ENCODE measurements at regions of chr17 and their contacts with region 1.

Region 1: DNA sequence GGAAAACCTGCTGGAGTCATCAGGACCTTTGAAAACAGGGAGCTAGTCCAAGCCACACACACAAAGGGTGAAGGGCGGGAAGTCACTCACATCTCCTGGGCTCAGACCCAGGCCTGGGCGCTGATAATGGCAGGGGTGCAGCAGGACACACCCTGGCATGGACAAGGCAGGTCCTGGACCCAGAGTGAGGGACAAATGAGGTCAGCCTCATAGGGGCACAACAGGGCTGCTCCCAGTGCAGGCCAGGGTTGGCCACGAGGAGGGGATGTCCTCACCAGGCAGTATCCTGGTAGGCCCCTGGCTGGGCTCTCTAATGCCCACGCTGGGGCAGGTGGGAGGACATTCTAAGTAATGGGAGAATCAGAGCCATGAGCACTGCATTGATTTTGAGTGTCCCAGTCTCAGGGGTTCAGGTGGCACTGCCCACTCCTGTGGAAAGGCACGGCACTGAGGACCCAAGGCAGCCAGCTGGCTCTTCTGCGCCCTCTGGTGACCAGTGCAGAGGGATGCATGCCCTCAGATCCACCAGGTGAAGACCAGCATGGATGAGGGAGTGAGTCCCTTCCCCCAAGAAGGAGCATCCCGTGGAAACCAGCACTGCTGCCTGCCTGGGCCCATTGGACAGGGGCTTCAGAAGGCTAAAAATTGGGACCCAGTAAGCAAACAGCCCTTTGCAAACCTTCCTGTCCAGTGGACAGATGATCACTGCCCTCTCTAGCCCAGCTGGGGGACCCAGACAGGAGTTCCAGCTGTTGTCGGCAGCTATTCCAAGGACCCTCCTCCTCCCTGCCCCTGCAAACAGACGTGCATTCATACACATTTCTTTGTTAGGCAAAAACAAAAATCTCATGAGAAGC is 23.4 kb upstream of the SREBF1 start:
- DNase-seq: peak; percentile 72 to 88
- ATAC-seq: peak; percentile 90 to 99 (median 99)
- H3K4me3 ChIP-seq: no peak overlapping the region
- H3K4me3 Mint-ChIP-seq: no peak overlapping the region
- H3K27ac ChIP-seq: no peak overlapping the region
- H3K27ac Mint-ChIP-seq: no peak overlapping the region
- H3K4me1 ChIP-seq: peaks cover 15% of the 10 kb centered on the region
- H3K4me1 Mint-ChIP-seq: peaks cover 0 to 6% of the 10 kb centered on the region in 2 donors
- H3K27me3 ChIP-seq: no peaks in the 10 kb centered on the region
- H3K27me3 Mint-ChIP-seq: no peaks in the 10 kb centered on the region
- CTCF ChIP-seq: peak; percentile 98

Region 2: GRCh38 chr17:17812211-17813057 is 47.7 kb before region 1 on chr17:
- intact Hi-C with region 1: loop called (anchors 1 kb)
- DNase-seq: peak; percentile 76 to 78
- ATAC-seq: peak; percentile 66 to 79 (median 70)
- H3K4me3 ChIP-seq: no peak overlapping the region
- H3K4me3 Mint-ChIP-seq: no peak overlapping the region
- H3K27ac ChIP-seq: no peak overlapping the region
- H3K27ac Mint-ChIP-seq: no peak overlapping the region
- H3K4me1 ChIP-seq: peaks cover 19% of the 10 kb centered on the region
- H3K4me1 Mint-ChIP-seq: peaks cover 7 to 29% of the 10 kb centered on the region in 2 donors
- H3K27me3 ChIP-seq: no peaks in the 10 kb centered on the region
- H3K27me3 Mint-ChIP-seq: no peaks in the 10 kb centered on the region
- CTCF ChIP-seq: peak; percentile 100

Region 3: DNA sequence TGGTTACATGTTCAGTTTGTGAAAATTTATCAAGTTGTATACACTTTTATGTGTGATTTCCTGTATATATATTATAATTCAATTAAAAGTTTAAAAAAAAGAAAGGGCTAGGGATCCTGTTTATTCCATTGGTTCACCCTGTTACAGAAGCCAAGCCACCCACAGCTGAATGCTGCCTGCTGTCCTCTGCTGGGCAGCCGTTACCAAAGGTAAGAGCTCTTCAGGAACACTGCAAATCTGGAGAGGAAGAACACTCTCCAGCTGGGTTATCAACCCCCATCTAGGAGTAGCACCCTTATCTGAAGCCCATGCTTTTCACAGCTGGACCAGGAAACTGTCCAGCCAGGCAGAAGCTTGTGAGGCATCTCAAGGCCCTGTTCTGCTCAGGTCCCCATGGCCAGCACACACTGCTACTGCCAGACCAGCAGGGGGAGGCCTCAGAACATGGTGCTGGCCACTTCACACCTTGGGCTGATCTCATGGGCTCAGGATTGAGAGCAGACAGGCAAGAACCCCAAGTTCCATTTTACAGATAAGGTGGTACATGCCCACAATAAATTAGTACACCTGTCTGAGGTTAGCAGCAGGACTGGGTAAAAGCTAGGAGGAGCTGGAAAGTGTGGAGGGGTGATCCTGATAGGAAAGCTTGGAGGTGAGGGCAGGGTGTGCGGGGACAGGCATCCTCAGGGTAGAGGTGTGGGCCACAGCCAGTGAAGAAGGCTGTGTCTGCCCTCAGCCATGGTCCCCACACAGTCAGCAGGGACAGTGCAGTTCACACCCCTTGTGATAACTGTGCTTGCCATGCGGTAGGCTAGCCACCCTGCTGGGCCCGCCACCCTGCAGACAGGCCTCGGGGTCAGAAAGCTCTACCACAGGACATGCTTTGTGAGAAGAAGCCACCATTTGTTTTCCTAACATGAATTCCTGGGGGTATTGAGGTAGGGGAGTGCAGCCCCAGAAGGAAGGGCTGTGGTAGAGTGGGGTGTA is 30.9 kb after region 1 on chr17:
- intact Hi-C with region 1: no loop called
- DNase-seq: peak in 1 of 2 donors; percentile 66
- ATAC-seq: peak; percentile 50 to 72 (median 67)
- H3K4me3 ChIP-seq: no peak overlapping the region
- H3K4me3 Mint-ChIP-seq: no peak overlapping the region
- H3K27ac ChIP-seq: no peak overlapping the region
- H3K27ac Mint-ChIP-seq: peak overlapping the region in 1 of 2 donors; percentile 15
- H3K4me1 ChIP-seq: no peaks in the 10 kb centered on the region
- H3K4me1 Mint-ChIP-seq: peaks cover 0 to 7% of the 10 kb centered on the region in 2 donors
- H3K27me3 ChIP-seq: no peaks in the 10 kb centered on the region
- H3K27me3 Mint-ChIP-seq: no peaks in the 10 kb centered on the region
- CTCF ChIP-seq: no peak

Region 4: DNA sequence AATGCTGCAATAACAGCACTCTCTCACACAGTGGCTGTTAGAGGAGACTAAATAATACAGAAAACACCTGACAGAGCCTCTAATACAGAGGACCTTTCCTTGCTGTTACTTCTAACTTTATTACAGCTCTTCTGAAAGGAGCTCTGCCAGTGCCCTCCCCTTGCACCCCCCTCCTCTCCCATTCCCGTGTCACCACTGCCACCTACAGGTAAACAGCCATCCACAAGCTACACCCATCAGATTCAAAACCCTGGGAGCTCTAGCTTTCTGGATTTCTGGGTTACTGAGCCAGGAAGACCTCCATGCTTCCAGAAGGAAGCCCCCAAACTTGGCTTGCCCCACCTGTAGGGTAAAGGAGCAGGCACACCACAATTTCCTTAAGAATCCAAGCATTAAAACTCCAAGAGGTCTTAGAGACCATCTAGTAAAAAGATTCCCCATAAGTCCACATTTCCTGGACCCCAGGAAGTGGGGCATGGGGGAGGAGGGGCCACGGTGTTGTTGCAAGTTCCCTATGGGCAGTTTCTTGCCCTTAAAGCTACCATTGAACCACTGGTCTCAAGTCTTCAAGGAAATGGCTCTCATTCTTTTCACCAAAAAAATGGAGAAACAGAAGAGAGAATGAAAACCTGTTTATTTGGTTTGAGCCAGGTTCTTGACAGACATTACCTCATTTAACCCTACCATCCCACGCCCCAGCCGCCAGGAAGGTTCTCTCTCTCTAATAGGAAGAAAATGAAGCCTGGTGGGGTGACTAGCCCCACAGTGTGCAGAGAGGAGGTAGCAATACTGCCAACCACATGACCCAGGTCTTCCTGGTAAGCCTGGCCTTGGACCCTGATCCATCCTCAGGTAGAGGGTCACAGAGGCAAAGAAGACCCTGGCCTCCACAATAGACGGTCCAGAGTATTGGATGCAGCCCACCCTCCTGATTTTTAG is 59.3 kb after region 1 on chr17:
- intact Hi-C with region 1: no loop called
- DNase-seq: peak; percentile 26 to 81
- ATAC-seq: peak; percentile 70 to 86 (median 72)
- H3K4me3 ChIP-seq: no peak overlapping the region
- H3K4me3 Mint-ChIP-seq: no peak overlapping the region
- H3K27ac ChIP-seq: no peak overlapping the region
- H3K27ac Mint-ChIP-seq: no peak overlapping the region
- H3K4me1 ChIP-seq: no peaks in the 10 kb centered on the region
- H3K4me1 Mint-ChIP-seq: peaks cover 24 to 29% of the 10 kb centered on the region in 2 donors
- H3K27me3 ChIP-seq: no peaks in the 10 kb centered on the region
- H3K27me3 Mint-ChIP-seq: no peaks in the 10 kb centered on the region
- CTCF ChIP-seq: peak; percentile 54

Measured in natural killer cell (primary cell).